ENCODE measurements at regions of chr2 and their contacts with region 1.

Region 1: DNA sequence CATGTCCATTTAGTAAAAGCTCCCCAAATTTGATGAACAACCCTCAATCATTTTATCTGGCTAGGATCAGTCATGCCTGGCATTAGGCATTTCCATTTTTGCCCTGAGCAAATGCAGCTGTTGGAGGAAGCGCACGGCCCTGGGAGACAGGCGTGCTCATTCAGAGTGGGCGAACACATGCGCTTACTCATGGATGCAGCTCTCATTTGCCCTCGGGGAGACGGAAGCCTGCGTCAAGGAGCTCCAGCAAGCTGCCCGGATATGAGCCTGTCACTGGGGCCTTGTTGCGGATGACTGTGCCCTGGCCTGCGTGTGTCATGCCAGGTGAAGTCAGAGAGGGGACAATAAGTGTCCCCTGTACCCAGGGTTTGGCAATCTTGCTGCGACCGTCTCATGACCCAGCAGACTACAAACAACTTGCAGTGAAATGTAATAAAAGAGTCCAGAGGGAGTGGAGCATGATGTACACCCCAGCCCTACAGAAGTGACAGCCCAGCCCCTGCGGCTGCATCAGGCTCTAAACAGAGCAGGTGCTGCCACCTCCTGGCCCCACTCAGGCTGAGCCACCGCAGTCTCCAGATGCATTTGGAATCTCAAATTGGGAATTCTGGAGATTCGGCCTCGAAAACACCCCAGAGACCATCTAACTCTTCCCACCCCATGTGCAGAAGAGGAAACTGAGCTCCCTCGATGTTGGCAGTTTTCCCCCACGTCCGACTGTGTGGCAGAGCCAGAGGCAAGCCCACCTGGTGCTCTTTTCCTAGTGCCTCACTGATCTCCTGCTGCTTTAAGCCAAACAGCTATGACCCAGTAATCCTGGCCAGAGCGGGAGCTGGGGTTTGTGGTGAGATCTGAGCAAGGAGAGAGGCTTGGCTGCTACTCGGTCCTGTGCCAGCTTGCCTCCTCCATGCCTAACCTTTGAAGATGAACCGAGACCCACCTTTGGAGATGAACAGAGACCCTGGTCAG is 105.0 kb upstream of the ALK start:
- DNase-seq: peak; percentile 26
- H3K4me3 ChIP-seq: no peak overlapping the region
- CTCF ChIP-seq: peak; percentile 75

Region 2: DNA sequence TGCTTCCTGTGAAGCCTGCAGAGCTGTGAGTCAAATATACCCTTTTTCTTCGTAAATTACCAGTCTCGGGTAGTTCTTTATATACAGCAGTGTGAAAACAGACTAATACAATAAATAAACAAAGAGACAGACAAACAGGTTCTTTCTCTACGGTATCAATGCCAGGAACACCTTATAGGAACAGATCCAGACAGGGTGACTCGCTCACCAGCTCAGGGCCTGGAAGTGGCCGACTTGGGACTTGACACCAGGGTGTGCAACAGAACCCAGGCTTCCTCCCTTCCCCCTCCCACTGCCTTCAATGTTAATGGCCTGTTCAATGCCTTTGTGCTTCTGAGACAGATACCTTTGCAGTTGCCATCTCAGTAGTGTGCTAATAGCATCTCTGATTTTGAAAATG is 414.5 kb before region 1 on chr2:
- CTCF ChIA-PET with region 1: no interaction called
- POLR2A ChIA-PET with region 1: no interaction called
- DNase-seq: no peak
- H3K4me3 ChIP-seq: no peak overlapping the region
- CTCF ChIP-seq: no peak

Region 3: GRCh38 chr2:30037016-30037415 is 10.6 kb after region 1 on chr2:
- CTCF ChIA-PET with region 1: interaction called, 17 read pairs
- POLR2A ChIA-PET with region 1: no interaction called
- DNase-seq: no peak
- H3K4me3 ChIP-seq: no peak overlapping the region
- CTCF ChIP-seq: no peak

Region 4: GRCh38 chr2:30046396-30046795 is 20.0 kb after region 1 on chr2:
- CTCF ChIA-PET with region 1: interaction called, 10 read pairs
- POLR2A ChIA-PET with region 1: no interaction called
- DNase-seq: no peak
- H3K4me3 ChIP-seq: no peak overlapping the region
- CTCF ChIP-seq: no peak

Measured in AG04449 (cell line).